Calu3 (cell line): ENCODE measurements at regions of chr15 and their contacts with region 1.

Region 1: DNA sequence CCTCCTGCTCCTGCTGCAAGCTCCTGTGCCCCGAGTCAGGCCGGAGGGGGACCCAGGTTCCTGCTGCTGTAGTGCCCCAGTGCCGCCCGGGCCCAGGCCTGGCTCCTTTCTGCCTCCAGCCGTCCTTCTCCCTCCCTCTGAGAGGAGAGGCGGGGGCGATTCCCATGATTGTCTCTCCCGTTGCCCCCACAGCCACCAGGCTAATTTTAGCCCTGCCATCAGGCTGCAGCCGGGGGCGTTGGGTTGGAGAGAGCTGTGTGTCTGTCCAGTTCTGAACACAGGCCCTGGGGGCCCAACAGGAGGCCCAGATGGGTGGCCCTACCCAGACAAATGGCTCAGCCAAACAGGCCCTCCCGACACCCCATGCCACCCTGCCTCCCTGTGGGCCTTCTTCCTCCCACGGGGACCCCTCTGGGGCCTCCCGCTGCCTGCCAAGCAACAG is 214.8 kb downstream of the TBC1D2B start:
- DNase-seq: no peak
- H3K4me3 Mint-ChIP-seq: no peak overlapping the region
- H3K27ac Mint-ChIP-seq: no peak overlapping the region
- H3K4me1 Mint-ChIP-seq: no peaks in the 10 kb centered on the region
- H3K27me3 Mint-ChIP-seq: peaks cover 100% of the 10 kb centered on the region
- CTCF ChIP-seq: no peak

Region 2: DNA sequence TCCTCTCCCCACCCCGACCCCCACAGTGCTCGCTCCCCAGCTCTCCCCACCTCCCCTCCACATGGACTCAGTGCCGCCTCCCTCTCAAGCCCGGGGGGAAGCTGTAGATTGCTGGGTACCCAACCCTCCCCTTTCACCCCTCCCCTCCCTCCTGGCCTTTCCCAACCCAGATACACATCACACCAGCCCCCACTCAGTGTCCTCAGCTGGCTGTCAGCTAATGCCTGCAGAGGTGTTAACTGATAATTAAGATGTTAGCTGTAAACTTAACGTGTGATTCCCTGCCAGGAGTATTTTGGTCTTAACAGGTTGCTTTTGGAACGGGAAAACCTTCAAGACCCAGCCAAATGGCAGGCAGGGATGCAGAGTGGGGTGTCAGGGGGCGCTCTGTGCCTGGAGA is 190.5 kb before region 1 on chr15:
- CTCF ChIA-PET with region 1: interaction called, 10 read pairs
- intact Hi-C with region 1: no loop called
- DNase-seq: no peak
- H3K4me3 Mint-ChIP-seq: no peak overlapping the region
- H3K27ac Mint-ChIP-seq: no peak overlapping the region
- H3K4me1 Mint-ChIP-seq: no peaks in the 10 kb centered on the region
- H3K27me3 Mint-ChIP-seq: peaks cover 50% of the 10 kb centered on the region
- CTCF ChIP-seq: no peak

Region 3: DNA sequence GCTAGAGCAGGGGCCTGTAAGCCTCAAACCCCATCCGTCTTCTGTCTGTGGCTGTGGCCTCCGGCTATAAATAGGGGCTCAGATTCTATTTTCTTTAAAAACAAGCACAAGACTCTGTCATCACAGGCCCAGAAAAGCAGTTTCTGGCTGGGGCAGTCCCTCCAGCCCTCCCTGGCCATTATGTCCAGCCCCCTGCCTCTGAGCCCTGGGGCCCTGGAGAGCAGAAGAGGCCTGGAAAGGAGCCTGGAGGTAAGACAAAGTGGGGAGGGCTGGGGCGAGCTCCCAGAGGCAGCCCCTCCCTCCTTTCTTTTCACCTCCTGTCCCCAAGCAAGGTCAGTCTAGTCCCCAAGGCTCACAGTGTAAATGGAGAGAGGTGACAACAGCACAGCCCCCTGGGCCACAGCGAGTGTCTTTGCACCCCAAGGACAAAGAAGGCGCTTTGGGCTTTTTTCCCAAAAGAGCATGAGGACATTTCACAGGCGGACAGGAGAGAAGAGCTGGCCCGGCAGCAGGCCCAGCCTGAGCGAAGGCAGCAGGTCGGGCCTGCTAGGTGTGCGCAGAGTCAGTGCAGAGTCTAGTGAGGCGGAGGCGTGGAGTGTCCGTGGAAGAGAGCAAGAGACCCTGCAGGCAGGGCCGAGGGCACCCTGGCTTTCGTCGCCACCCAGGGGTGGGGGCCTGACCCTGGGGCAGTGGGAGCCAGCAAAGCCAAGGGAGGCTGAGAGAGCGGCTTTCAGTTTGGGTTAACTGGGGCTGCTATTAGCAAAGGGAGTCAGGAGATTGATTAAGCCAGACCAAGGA is 26.5 kb after region 1 on chr15:
- CTCF ChIA-PET with region 1: no interaction called
- intact Hi-C with region 1: no loop called
- DNase-seq: no peak
- H3K4me3 Mint-ChIP-seq: no peak overlapping the region
- H3K27ac Mint-ChIP-seq: no peak overlapping the region
- H3K4me1 Mint-ChIP-seq: no peaks in the 10 kb centered on the region
- H3K27me3 Mint-ChIP-seq: peaks cover 54% of the 10 kb centered on the region
- CTCF ChIP-seq: no peak

Region 4: DNA sequence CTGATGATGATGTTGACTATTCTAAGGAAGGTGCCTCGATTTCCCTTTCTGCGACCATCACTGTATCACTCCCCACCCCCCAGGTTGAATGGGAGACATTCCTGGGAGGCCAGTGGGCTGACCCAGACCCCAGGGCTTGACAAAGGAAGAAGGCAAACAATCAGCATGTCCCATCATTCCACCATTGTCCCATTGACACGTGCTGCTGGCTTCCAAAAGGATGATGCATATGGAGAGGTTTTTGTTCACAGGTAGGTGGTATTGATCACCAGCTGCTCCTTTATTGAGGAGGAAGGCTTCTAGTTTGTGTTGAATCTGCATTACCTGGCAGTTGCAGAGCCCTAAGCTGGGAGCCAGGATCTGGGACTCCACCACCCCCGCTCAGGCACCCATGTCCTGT is 1197.5 kb after region 1 on chr15:
- CTCF ChIA-PET with region 1: no interaction called
- intact Hi-C with region 1: no loop called
- DNase-seq: no peak
- H3K4me3 Mint-ChIP-seq: no peak overlapping the region
- H3K27ac Mint-ChIP-seq: no peak overlapping the region
- H3K4me1 Mint-ChIP-seq: no peaks in the 10 kb centered on the region
- H3K27me3 Mint-ChIP-seq: peaks cover 95% of the 10 kb centered on the region
- CTCF ChIP-seq: no peak